ENCODE measurements at regions of chr13 and their contacts with region 1.

Region 1: DNA sequence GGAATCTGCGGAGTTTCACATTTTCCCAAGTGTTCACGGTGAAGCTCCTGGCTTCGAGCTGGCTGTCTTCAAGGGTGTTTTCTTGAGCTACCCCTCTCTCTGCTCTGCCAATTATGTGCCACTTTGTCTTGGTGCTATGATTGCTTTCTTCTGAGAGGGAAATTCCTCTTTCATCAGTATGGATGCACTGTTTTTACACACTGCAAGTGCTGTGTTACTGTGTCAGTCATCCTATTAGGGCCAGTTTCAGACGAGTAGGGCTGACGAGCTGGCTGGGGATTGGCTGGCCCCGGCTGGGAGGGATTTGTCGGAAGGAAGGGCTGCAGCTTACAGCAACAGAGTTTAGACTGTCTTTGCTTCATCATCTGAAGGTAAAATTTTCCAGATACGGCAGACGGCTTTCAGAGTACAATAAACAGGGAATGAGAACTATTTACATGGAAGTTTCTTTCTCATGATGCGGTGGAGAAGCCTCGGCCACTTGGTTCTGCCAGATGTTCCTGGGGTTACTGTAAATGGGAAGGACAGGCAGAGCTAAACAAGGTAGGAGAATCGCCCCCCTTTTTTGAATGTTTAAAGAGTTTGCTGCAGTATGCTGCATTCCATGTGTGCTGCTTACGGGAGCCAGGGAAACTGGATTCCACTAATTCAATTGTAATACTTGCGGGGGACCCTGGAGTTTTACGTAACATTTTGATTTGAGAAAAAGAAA is at the start of gene MBNL2:
- DNase-seq: peak; percentile 92
- ATAC-seq: peak; percentile 98
- H3K4me3 ChIP-seq: peak within 1 kb of the TSS; percentile 68
- H3K27ac ChIP-seq: peak within 1 kb of the TSS; percentile 87
- H3K4me1 ChIP-seq: peaks cover 31% of the 10 kb centered on the region
- H3K27me3 ChIP-seq: no peaks in the 10 kb centered on the region
- CTCF ChIP-seq: no peak
- total RNA-seq, gene MBNL2: 60.6 TPM

Region 2: DNA sequence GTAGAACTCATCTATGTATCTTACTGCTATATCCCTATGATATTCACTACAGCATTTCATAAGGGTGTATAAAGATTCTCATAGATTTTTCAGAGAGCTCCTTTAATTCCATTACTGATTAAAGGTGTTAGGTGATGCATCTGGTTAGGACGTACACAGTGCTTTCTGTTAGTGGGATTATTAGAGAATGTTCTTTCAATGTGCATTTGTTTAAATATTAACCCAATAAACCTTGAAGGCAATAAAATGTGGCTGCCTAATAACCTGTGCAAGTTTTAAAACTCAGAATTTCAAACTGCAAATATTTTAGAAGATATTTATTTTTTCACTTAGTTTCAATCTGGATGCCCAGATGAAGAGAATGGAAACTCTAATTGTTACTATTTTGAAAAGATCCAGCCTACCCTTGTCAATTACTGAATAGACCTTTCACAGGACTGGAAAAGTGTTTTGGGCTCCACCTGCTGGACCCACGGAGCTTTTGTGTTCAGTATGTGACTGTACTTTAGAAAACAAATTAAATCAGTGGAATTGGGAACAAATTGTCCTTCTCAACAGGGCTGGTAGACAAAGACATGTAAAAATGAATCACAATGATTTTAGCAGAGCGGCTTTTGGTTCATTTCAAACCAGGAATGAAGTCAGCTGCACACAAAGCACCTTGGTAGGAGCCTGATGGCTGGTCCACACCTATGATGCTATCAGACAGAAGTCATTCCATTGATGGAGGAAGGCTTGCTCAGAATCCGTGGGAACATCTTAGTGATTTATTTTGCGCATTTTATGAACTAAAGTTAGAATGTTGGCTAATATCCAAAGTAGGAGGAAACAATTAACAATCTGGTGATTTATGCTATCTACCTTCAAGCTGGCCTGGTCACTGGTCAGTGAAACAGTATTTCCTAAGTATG is 122.4 kb after region 1 on chr13:
- intact Hi-C with region 1: loop called (anchors 10 kb)
- DNase-seq: no peak
- ATAC-seq: peak; percentile 87
- H3K4me3 ChIP-seq: no peak overlapping the region
- H3K27ac ChIP-seq: no peak overlapping the region
- H3K4me1 ChIP-seq: peaks cover 20% of the 10 kb centered on the region
- H3K27me3 ChIP-seq: no peaks in the 10 kb centered on the region
- CTCF ChIP-seq: peak; percentile 71

Measured in upper lobe of right lung (tissue), 1 donor.